Thyroid gland (tissue), 4 donors: ENCODE measurements at regions of chr3 and their contacts with region 1.

Region 1: GRCh38 chr3:48439820-48440589 is at the starts of genes CCDC51 and TMA7:
- DNase-seq: peak; percentile 99 to 100
- H3K4me3 ChIP-seq: peak within 1 kb of the TSS; percentile 72 to 91 (median 84)
- H3K27ac ChIP-seq: peak within 1 kb of the TSS; percentile 72 to 89 (median 84)
- H3K4me1 ChIP-seq: peaks cover 22 to 26% of the 10 kb centered on the region in 2 donors
- H3K27me3 ChIP-seq: no peaks in the 10 kb centered on the region
- CTCF ChIP-seq: no peak
- POLR2A ChIP-seq: peak; percentile 37 to 92
- total RNA-seq, gene CCDC51: 8.6 to 17.0 (median 15.0) TPM
- total RNA-seq, gene TMA7: 133 to 413 (median 301) TPM

Region 2: DNA sequence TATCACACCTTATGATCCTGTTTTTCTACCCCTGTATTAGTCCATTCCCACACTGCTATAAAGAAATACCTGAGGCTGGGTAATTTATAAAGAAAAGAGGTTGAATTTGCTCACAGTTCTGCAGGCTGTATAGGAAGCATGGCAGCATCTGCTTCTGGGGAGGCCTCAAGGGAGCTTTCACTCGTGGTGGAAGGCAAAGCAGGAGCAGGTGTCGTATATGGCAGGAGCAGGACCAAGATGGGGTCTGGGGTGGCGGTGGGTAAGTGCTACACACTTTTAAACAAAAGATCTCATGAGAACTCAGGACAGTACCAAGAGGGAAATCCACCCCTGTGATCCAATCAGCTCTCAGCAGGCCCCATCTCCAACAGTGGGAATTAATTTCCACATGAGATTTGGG is 948.8 kb before region 1 on chr3:
- intact Hi-C with region 1: no loop called
- DNase-seq: no peak
- H3K4me3 ChIP-seq: no peak overlapping the region
- H3K27ac ChIP-seq: no peak overlapping the region
- H3K4me1 ChIP-seq: no peaks in the 10 kb centered on the region
- H3K27me3 ChIP-seq: no peaks in the 10 kb centered on the region
- CTCF ChIP-seq: no peak
- POLR2A ChIP-seq: no peak

Region 3: DNA sequence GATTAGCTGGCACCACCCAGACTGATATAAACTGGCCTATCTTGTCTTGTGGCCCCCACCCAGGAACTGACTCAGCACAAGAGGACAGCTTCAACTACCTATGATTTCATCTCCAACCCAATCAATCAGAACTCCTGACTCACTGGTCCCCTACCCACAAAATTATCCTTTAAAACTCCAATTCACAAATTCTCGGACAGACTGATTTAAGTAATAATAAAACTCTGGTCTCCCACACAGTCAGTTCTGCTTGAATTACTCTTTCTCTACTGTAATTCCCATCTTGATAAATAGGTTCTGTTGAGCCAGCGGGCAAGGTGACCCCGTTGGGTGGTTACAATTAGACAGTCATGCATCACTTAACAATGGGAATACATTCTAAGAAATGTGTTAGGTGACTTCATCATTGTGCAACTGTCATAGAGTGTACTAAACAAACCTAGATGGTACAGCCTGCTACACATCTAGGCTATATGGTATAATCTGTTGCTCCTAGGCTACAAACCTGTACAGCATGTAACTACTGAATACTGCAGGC is 375.6 kb before region 1 on chr3:
- intact Hi-C with region 1: no loop called
- DNase-seq: no peak
- H3K4me3 ChIP-seq: no peak overlapping the region
- H3K27ac ChIP-seq: no peak overlapping the region
- H3K4me1 ChIP-seq: peaks cover 2 to 8% of the 10 kb centered on the region in 2 donors
- H3K27me3 ChIP-seq: no peaks in the 10 kb centered on the region
- CTCF ChIP-seq: no peak
- POLR2A ChIP-seq: no peak

Region 4: DNA sequence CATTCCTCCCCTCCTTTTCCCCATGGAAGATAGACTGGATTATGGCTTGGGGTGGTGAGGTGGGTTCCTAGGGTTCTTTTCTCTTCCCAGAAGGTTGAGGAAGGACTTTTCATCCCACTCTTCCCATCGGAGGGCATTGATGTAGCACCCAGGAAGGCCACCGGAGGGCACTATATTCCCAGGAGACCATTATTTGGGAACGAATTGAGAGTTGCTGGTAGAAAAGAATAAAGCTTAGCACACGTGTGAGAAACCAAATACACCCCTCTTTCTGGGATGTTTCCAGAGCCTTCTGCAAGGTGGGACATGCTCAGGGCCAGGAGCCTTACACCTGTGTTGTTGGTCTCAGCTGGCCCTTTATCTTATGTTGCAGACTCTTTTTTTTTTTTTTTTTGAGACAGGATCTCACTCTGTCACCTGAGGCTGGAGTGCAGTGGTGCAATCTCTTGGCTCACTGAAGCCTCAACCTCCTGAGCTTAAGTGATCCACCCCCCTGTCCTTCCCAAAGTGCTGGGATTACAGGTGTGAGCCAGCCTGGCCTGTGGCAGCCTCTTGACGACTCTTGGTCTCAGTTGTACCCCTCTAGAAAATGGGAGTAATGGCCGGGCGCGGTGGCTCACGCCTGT is 245.4 kb before region 1 on chr3:
- intact Hi-C with region 1: loop called (anchors 5 kb)
- DNase-seq: peak; percentile 78
- H3K4me3 ChIP-seq: no peak overlapping the region
- H3K27ac ChIP-seq: peak overlapping the region in 2 of 3 donors; percentile 23 to 30
- H3K4me1 ChIP-seq: no peaks in the 10 kb centered on the region
- H3K27me3 ChIP-seq: no peaks in the 10 kb centered on the region
- CTCF ChIP-seq: peak; percentile 74 to 91 (median 84)
- POLR2A ChIP-seq: no peak

Region 5: GRCh38 chr3:48273594-48274211 is 166.3 kb before region 1 on chr3:
- intact Hi-C with region 1: loop called (anchors 10 kb)
- DNase-seq: peak; percentile 46 to 51
- H3K4me3 ChIP-seq: no peak overlapping the region
- H3K27ac ChIP-seq: no peak overlapping the region
- H3K4me1 ChIP-seq: peaks cover 0 to under 1% of the 10 kb centered on the region in 2 donors
- H3K27me3 ChIP-seq: no peaks in the 10 kb centered on the region
- CTCF ChIP-seq: peak; percentile 35 to 76 (median 62)
- POLR2A ChIP-seq: no peak

Region 6: GRCh38 chr3:48400824-48401433 is 39.1 kb before region 1 on chr3:
- intact Hi-C with region 1: loop called (anchors 2 kb)
- DNase-seq: peak; percentile 71 to 80
- H3K4me3 ChIP-seq: no peak overlapping the region
- H3K27ac ChIP-seq: peak overlapping the region in 2 of 3 donors; percentile 82 to 89
- H3K4me1 ChIP-seq: peaks cover 6 to 20% of the 10 kb centered on the region in 2 donors
- H3K27me3 ChIP-seq: no peaks in the 10 kb centered on the region
- CTCF ChIP-seq: peak in 5 of 6 experiments; percentile 63 to 97 (median 90)
- POLR2A ChIP-seq: no peak

Region 7: GRCh38 chr3:48635222-48636021 is 195.4 kb after region 1 on chr3 and contains the start of gene SLC26A6:
- intact Hi-C with region 1: no loop called
- DNase-seq: peak; percentile 96 to 97
- H3K4me3 ChIP-seq: peak within 1 kb of the TSS; percentile 52 to 83 (median 78)
- H3K27ac ChIP-seq: peak within 1 kb of the TSS in 2 of 3 donors; percentile 58 to 67
- H3K4me1 ChIP-seq: peaks cover 8 to 15% of the 10 kb centered on the region in 2 donors
- H3K27me3 ChIP-seq: no peaks in the 10 kb centered on the region
- CTCF ChIP-seq: peak in 5 of 6 experiments; percentile 1 to 47 (median 23)
- POLR2A ChIP-seq: peak in 1 of 2 donors; percentile 70
- total RNA-seq, gene SLC26A6: 7.5 to 19.1 (median 11.4) TPM